Activated T-helper 1 cell treated with anti-CD3 and anti-CD28 coated beads, Interleukin-12 subunit alpha, Interleukin-12 subunit beta, Interleukin-2, Interleukin-4 antibody, amounts not matched to agents 30 ng/mL and 10 ng/mL and 1 ng/mL, durations not matched to agents 14 hours and 24 hours and 36 hours (primary cell): ENCODE measurements at regions of chr1 and their contacts with region 1.

Region 1: DNA sequence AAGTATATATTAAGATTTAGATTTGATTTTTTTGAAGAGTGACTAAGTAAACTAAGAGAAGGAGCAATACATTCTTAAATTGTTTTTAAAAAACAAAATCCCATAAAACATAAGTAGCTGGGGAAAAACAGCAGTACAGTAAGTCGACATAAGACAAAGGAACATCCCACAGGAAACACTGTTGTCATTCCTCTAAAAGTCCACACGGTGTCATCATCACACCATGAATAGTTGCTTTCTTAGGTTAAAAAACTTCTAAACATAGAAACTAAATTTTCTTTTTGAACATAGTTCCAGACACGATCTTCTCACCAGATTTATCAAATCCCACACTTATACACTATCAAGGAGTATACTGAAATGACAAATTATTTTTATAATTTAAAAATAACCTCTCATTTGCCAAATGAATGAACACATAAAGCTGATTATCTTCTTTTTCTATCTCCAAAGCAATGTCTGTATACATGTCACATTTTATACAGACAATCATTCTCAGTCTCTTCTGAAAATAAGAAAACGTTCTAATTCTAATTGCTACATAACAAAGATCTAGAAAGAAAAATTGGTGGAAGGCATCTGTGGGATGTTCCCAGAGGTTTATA is 15.8 kb downstream of the ODF2L start:
- DNase-seq: no peak
- H3K4me3 Mint-ChIP-seq: no peak overlapping the region
- H3K27ac Mint-ChIP-seq: no peak overlapping the region
- H3K4me1 Mint-ChIP-seq: peaks cover 22% of the 10 kb centered on the region
- H3K27me3 Mint-ChIP-seq: no peaks in the 10 kb centered on the region

Region 2: DNA sequence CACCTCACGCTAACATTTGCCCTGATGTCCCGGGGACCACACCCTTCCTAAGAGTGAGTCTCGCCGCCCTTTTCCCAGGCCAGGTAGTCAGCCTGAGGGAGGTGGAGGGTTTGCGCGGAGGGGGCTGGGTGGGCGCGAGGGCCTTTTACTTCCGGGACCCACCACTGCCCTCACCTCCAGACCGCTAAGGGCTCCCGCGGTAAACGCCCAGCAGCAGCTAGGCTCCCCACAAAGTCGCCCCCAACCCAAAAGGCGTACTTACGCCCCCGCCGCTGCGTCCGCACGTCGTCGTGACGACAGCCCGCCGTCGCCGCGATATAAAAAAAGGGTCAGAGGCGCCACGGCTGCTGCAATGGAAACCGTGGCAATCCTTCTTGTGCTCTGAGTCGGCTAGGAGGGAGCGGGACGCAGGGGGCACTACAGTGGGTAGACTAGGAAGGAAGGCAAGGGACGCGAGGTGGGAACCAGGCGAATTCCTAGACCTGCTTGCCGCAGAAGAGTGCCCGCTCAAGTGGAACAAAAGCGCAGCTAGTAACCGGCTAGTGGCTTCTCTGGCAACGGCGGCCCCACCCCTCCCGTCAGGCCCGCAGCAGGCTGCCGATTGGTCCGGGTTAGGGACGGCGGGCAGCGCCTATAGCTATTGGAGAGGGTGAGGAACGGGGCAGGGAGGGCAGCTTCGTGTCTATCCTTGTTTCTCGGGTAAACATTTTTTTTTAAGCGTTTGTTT is 15.6 kb after region 1 on chr1 and contains the start of gene ODF2L:
- intact Hi-C with region 1: loop called (anchors 1 kb)
- DNase-seq: peak; percentile 90
- H3K4me3 Mint-ChIP-seq: peak within 1 kb of the TSS; percentile 97
- H3K27ac Mint-ChIP-seq: peak within 1 kb of the TSS; percentile 96
- H3K4me1 Mint-ChIP-seq: peaks cover 54% of the 10 kb centered on the region
- H3K27me3 Mint-ChIP-seq: no peaks in the 10 kb centered on the region
- total RNA-seq, gene ODF2L: 21.0 and 22.4 TPM in 2 replicates

Region 3: GRCh38 chr1:86470859-86471258 is 90.5 kb after region 1 on chr1:
- intact Hi-C with region 1: loop called (anchors 1 kb)
- DNase-seq: no peak
- H3K4me3 Mint-ChIP-seq: no peak overlapping the region
- H3K27ac Mint-ChIP-seq: no peak overlapping the region
- H3K4me1 Mint-ChIP-seq: no peaks in the 10 kb centered on the region
- H3K27me3 Mint-ChIP-seq: peaks cover 28% of the 10 kb centered on the region

Region 4: GRCh38 chr1:86687595-86687994 is 307.2 kb after region 1 on chr1:
- intact Hi-C with region 1: loop called (anchors 5 kb)
- DNase-seq: no peak
- H3K4me3 Mint-ChIP-seq: no peak overlapping the region
- H3K27ac Mint-ChIP-seq: no peak overlapping the region
- H3K4me1 Mint-ChIP-seq: no peaks in the 10 kb centered on the region
- H3K27me3 Mint-ChIP-seq: peaks cover 6% of the 10 kb centered on the region

Region 5: GRCh38 chr1:86833461-86834215 is 453.3 kb after region 1 on chr1:
- intact Hi-C with region 1: loop called (anchors 1 kb)
- DNase-seq: peak; percentile 24
- H3K4me3 Mint-ChIP-seq: no peak overlapping the region
- H3K27ac Mint-ChIP-seq: no peak overlapping the region
- H3K4me1 Mint-ChIP-seq: peaks cover 6% of the 10 kb centered on the region
- H3K27me3 Mint-ChIP-seq: peaks cover 5% of the 10 kb centered on the region